ENCODE measurements at regions of chr12 and their contacts with region 1.

Region 1: DNA sequence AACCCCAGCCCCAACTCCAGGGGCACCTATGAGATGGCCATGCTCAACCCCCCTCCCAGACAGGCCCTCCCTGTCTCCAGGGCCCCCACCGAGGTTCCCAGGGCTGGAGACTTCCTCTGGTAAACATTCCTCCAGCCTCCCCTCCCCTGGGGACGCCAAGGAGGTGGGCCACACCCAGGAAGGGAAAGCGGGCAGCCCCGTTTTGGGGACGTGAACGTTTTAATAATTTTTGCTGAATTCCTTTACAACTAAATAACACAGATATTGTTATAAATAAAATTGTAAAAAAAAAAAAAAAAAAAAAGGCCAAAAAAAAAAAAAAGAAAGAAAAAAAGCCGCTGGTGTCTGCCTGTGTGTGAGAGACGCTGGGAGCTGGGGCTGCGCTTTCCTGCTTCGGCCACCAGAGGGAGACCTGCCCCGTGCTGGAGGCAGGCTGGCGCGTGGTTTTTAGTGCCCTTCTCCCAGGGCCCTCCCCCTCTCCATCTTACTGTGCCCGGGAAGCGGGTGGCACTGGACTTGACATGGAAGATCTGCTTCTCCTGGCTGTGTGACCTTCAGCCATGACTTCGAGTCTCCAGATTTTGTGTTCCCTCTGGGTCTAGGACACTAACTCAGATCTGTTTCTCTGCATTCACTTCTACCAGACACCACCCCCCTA is 3.4 kb upstream of the NXPH4 start:
- DNase-seq: peak; percentile 59
- ATAC-seq: peak; percentile 62
- H3K4me3 ChIP-seq: no peak overlapping the region
- H3K27ac ChIP-seq: no peak overlapping the region
- H3K4me1 ChIP-seq: peaks cover 17 to 47% of the 10 kb centered on the region in 2 experiments
- H3K27me3 ChIP-seq: no peaks in the 10 kb centered on the region
- CTCF ChIP-seq: peak; percentile 86 to 97 (median 97)
- POLR2A ChIP-seq: no peak
- RAD21 ChIP-seq: peak; percentile 87

Region 2: GRCh38 chr12:57229634-57230380 is 16.6 kb after region 1 on chr12 and contains the start of gene SHMT2:
- CTCF ChIA-PET with region 1: interaction called, 27 read pairs
- POLR2A ChIA-PET with region 1: interaction called, 5 read pairs
- RAD21 ChIA-PET with region 1: no interaction called
- intact Hi-C with region 1: no loop called
- DNase-seq: peak; percentile 91
- ATAC-seq: peak; percentile 80
- H3K4me3 ChIP-seq: peak within 1 kb of the TSS; percentile 71 to 86
- H3K27ac ChIP-seq: peak within 1 kb of the TSS; percentile 88
- H3K4me1 ChIP-seq: peaks cover 6 to 17% of the 10 kb centered on the region in 2 experiments; a peak in 3 of 4 replicates
- H3K27me3 ChIP-seq: no peaks in the 10 kb centered on the region
- CTCF ChIP-seq: no peak
- POLR2A ChIP-seq: peak; percentile 62
- RAD21 ChIP-seq: no peak
- total RNA-seq, gene SHMT2: 280 TPM

Measured in HCT116 (cell line).